SK-N-SH (cell line): ENCODE measurements at regions of chr5 and their contacts with region 1.

Region 1: GRCh38 chr5:142748568-142749249 is 21.5 kb upstream of the ARHGAP26 start:
- DNase-seq: peak; percentile 16
- H3K4me3 ChIP-seq: no peak overlapping the region; a peak in 1 of 4 replicates
- H3K27ac ChIP-seq: peak overlapping the region in 1 of 2 experiments; percentile 70; a peak in 2 of 4 replicates
- H3K4me1 ChIP-seq: peaks cover 11 to 26% of the 10 kb centered on the region in 2 experiments
- H3K27me3 ChIP-seq: no peaks in the 10 kb centered on the region
- CTCF ChIP-seq: peak; percentile 49
- EP300 ChIP-seq: no peak
- RAD21 ChIP-seq: peak; percentile 80

Region 2: DNA sequence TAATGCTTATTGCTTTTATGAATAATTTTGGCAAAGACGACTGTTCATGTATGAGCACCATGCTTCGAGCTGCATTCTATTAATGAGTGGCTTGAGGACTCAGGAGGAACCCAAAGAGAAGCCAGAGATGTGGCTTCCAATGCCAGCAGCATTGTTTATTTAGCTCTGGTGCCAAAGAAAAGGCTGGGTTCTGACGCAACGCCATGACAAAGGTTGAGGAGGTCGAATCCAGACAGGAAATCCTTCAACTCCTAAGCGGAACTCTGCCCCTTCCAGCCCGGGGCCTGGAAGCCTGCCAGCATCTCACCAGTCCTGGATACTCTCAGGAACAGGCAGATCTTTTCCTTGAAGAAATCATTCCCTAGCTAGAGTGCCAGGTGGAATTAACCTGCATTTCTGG is 125.8 kb after region 1 on chr5:
- CTCF ChIA-PET with region 1: interaction called, 185 read pairs
- POLR2A ChIA-PET with region 1: no interaction called
- DNase-seq: no peak
- H3K4me3 ChIP-seq: no peak overlapping the region
- H3K27ac ChIP-seq: peak overlapping the region; percentile 29 to 36; a peak in 2 of 4 replicates
- H3K4me1 ChIP-seq: peaks cover 50 to 57% of the 10 kb centered on the region in 2 experiments
- H3K27me3 ChIP-seq: no peaks in the 10 kb centered on the region
- CTCF ChIP-seq: no peak
- EP300 ChIP-seq: no peak
- RAD21 ChIP-seq: no peak